Right ventricle myocardium inferior (tissue), 1 donor: ENCODE measurements at regions of chr12 and their contacts with region 1.

Region 1: DNA sequence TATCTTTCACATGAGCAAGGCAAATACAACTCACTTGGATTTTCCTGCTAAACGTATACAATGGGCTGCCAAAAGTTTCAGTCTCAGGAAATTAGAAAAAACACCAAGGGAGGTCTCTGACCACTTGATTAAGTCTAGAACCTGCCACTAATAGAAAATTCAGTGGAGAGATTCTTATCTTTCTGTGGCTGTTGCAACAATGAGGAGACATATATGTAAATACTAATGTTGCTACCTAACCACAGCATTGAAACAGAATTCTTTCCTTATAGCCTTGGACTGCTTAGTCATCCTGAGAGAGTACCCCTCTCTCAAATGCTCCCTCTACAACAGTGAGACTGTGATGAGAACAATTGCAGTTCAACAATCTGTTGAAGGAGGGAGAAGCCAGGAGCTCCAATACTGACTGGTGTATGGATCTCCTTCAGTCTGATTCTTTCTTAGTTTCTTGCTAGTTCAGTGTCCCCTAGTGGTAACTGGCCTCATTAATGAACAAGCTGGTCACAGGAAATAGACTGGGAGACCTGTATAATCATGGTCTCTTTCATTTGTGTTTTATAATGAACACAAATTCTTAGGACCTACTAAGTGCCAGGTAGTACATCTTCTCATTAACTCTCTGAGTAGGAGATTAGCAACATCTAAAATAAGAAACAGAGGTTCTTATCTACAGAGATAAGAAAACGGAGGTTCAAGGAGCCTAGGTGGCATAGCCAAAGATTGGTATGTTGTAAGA is 164.5 kb downstream of the SLC38A4 start:
- DNase-seq: no peak
- ATAC-seq: peak; percentile 85

Region 2: DNA sequence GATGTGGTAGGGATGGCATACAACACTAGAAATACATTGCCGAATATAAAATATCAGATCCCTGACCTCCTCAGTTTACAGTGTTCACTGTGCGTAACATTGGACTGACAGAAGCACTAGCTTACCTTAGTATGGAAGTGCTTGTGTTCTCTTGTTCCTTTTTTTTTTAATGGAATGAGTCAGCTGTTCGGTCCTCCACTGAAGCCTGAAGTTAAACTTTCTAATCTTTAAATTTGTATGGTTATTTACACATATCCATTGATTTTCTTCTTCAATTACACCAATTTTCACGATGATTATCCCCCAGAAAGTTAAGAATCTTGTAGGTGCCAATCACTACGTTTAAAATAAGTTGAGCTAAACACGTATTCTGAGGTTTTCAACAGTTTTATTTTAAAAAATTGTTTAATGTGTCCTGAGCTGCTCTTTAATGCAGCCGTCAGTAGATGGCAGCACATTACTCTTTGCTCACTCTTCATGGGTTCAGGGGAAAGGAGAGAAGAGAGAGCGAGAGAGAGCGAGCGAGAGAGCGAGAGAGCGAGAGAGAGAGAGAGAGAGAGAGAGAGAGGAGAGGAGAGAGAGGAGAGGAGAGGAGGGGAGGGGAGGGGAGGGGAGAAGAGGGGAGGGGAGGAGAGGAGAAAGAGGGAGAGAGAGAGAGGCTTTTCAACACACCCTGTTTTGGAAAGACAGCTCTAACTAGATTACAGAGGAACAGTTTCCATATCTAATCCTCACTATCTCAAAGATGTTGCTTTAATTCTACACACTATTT is 536.2 kb before region 1 on chr12:
- intact Hi-C with region 1: loop called (anchors 5 kb)
- DNase-seq: no peak
- ATAC-seq: peak; percentile 90

Region 3: GRCh38 chr12:46354111-46354798 is 307.0 kb before region 1 on chr12:
- intact Hi-C with region 1: loop called (anchors 5 kb)
- DNase-seq: no peak
- ATAC-seq: no peak

Region 4: DNA sequence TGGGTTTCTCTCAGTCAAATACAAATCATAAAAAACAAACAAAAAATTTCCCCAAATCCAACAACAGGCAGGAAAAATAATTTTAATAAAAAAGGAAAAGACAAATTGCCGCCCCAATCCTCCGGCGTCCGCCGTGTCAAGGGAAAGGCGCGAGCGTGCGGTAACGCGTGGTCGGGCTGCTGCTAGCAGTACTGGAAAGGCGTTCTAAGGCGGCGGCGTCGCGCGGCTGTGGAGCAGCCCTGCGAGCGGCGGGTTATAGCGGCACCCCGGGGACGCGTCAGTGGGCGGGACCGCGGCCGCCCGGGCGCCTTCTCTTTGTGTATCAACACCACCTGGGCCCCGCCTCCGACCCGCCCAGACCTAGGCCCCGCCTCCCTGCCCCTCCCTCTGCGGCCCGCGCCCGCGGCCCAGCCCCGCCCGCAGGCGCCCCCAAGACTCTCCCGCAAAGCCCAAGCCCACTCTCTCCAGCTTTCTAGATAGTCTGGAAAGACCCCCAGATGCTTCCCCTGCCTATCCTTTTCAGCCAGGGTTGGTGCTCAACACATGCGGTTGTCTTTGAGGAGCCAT is 288.7 kb before region 1 on chr12 and contains the start of gene SLC38A2:
- intact Hi-C with region 1: loop called (anchors 1 kb)
- DNase-seq: peak; percentile 100
- ATAC-seq: peak; percentile 98
- total RNA-seq, gene SLC38A2: 161 TPM

Region 5: DNA sequence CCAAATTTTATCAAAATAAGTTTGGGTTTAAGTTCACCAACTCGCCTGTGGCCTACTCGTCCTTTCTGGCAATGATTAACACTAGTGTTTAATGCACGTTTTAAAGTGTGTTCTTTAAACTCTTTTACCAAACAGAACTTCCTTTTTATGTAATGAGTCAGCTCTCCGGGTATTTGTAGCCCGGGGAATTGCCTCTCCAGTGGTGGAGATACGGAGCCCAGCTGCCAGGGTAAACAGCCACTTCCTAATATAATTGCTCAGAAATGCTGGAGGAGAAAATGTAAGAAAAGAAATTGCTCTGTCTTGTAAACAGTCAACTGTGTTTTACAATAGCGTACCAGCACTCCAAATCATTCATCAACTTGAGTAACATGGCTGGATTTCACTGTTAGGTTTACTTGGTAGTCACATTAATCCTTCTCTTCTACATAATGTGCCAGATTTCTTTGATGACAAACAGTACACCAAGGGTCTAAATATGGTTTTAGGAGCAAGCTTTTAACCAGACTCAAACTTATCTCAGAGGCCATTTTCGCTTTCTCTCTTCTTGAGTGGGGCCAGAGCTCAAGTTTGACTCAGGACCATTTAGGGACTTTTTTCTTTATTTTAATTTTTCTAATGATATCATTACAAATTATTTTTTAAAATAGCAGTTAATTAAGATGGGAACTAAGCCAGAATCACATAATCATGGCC is 187.5 kb before region 1 on chr12:
- intact Hi-C with region 1: loop called (anchors 5 kb)
- DNase-seq: no peak
- ATAC-seq: peak; percentile 87

Region 6: DNA sequence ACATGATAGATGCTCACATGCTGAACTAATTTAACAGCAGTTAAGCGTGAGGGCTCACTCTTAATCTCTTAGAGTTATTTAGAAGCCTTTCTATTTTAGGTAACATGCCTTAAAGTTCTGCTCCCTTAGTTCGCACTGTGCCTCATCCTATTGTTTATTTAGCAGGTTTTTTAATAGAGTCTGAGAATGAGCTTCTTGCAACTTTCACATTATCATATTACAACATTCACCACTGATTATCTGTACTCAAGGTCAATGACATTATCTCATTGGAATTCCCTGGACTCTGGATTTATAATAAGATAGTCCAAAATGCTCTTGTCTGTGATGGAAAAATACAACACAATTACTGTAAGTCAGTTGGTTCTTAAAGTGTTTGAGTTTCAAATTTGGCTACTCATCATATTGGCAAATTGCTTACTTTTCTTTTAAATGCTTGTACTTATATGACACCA is 105.1 kb before region 1 on chr12:
- intact Hi-C with region 1: loop called (anchors 1 kb)
- DNase-seq: no peak
- ATAC-seq: peak; percentile 91

Region 7: DNA sequence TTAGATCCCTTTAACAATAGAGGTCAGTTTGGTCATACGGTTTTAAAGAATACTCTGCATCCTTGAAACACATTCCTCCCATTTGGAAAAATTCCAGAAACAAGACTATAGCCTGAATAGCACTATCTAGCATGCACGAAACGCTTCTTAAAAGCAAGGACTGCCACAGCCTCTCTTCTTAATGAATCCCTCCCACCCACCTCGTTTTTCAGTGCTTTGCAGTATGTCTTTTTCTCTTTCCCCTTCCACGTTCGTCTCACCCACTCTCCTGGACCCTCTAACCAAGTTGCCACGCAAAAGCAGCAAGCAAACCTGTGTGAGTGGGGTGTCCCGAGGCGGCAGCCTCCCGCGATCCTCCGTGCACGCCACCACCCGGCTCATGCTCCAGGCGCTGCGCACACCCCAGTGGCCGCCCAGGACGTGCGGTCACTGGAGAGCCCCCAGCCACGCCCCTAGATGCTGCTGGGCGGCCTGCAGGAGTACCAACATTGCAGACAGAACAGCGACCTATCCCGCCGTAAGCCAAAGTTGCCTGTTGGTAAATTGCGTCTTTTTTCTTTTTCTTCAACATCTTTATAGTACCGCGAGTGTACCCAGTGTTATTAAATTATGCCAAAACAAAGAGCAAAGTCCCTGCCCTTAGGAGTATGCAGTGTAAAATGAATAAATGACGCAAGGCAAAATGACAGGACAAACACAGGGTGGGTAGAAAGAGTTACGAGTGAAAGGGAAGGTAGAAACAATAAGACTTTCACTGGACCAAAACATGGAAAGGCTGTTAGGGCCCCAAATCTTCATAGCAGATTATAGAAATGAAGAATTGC is 164.5 kb after region 1 on chr12 and contains the start of gene SLC38A4:
- intact Hi-C with region 1: no loop called
- DNase-seq: peak; percentile 71
- ATAC-seq: peak; percentile 95
- total RNA-seq, gene SLC38A4: 2.8 TPM